Endothelial cell of umbilical vein (primary cell): ENCODE measurements at regions of chr6 and their contacts with region 1.

Region 1: DNA sequence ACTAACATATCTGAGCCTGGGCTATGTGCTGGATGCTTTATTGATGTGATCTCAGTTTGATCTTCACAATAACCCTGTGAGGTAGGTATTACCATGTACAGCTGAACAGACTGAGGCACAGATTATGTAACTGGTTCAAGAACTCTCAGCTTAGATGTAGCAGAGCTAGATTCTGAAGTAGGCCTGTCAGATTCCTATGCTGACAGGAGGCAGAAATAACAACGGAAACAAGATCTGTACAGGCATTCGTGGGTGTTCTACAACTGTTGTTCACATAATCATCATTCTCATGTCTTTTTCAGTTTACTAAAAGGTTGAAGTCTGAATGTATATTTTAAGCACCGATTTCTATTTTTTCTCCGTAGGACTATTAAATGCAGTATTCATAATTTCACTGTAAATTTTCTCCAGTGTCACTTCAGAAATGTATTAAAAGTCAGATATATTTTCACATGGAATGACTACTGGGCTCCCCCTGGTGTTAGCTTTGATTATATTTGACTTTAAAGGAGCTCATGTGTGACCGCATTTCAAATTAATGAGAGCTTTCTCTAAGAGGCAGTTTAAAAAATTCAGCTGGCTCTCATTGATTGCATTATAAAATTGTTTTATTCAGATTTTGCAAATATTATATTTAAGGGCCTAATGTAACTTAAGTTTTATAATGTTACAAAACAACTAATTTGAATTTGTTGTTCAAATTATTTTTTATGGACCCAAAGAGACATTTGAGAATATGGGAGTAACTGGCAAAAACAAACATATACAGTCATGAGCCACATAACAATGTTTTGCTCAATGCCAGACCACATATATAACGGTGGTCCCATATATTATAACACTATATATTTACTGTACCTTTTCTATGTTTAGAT is 36.4 kb upstream of the SLC17A4 start:
- DNase-seq: peak; percentile 48
- H3K4me3 ChIP-seq: no peak overlapping the region
- H3K27ac ChIP-seq: no peak overlapping the region
- H3K4me1 ChIP-seq: peaks cover 23% of the 10 kb centered on the region
- H3K27me3 ChIP-seq: no peaks in the 10 kb centered on the region
- CTCF ChIP-seq: peak; percentile 35 to 42
- POLR2A ChIP-seq: no peak

Region 2: GRCh38 chr6:25223490-25223991 is 494.6 kb before region 1 on chr6:
- CTCF ChIA-PET with region 1: interaction called, 35 read pairs
- POLR2A ChIA-PET with region 1: no interaction called
- dilution Hi-C with region 1: no loop called
- intact Hi-C with region 1: loop called (anchors 1 kb)
- DNase-seq: peak; percentile 81
- H3K4me3 ChIP-seq: peak overlapping the region in 1 of 3 experiments; percentile 20
- H3K27ac ChIP-seq: no peak overlapping the region
- H3K4me1 ChIP-seq: peaks cover 6% of the 10 kb centered on the region
- H3K27me3 ChIP-seq: no peaks in the 10 kb centered on the region
- CTCF ChIP-seq: peak; percentile 68 to 72
- POLR2A ChIP-seq: no peak

Region 3: GRCh38 chr6:25556516-25556915 is 161.6 kb before region 1 on chr6:
- CTCF ChIA-PET with region 1: interaction called, 11 read pairs
- POLR2A ChIA-PET with region 1: no interaction called
- dilution Hi-C with region 1: no loop called
- intact Hi-C with region 1: loop called (anchors 5 kb)
- DNase-seq: peak; percentile 83
- H3K4me3 ChIP-seq: no peak overlapping the region
- H3K27ac ChIP-seq: no peak overlapping the region
- H3K4me1 ChIP-seq: no peaks in the 10 kb centered on the region
- H3K27me3 ChIP-seq: no peaks in the 10 kb centered on the region
- CTCF ChIP-seq: peak; percentile 73 to 85
- POLR2A ChIP-seq: no peak

Region 4: GRCh38 chr6:25652007-25652515 is 66.0 kb before region 1 on chr6 and contains the start of gene SCGN:
- CTCF ChIA-PET with region 1: interaction called, 10 read pairs
- POLR2A ChIA-PET with region 1: no interaction called
- dilution Hi-C with region 1: no loop called
- intact Hi-C with region 1: loop called (anchors 5 kb)
- DNase-seq: peak; percentile 52
- H3K4me3 ChIP-seq: no peak within 1 kb of the TSS
- H3K27ac ChIP-seq: no peak within 1 kb of the TSS
- H3K4me1 ChIP-seq: no peaks in the 10 kb centered on the region
- H3K27me3 ChIP-seq: peaks cover 0 to 8% of the 10 kb centered on the region in 2 experiments
- CTCF ChIP-seq: no peak
- POLR2A ChIP-seq: no peak
- total RNA-seq, gene SCGN: not detected in 2 replicates

Region 5: GRCh38 chr6:25692472-25692871 is 25.6 kb before region 1 on chr6:
- CTCF ChIA-PET with region 1: interaction called, 14 read pairs
- POLR2A ChIA-PET with region 1: no interaction called
- dilution Hi-C with region 1: no loop called
- intact Hi-C with region 1: no loop called
- DNase-seq: no peak
- H3K4me3 ChIP-seq: no peak overlapping the region
- H3K27ac ChIP-seq: no peak overlapping the region
- H3K4me1 ChIP-seq: no peaks in the 10 kb centered on the region
- H3K27me3 ChIP-seq: peaks cover 0 to 2% of the 10 kb centered on the region in 2 experiments
- CTCF ChIP-seq: no peak
- POLR2A ChIP-seq: no peak

Region 6: DNA sequence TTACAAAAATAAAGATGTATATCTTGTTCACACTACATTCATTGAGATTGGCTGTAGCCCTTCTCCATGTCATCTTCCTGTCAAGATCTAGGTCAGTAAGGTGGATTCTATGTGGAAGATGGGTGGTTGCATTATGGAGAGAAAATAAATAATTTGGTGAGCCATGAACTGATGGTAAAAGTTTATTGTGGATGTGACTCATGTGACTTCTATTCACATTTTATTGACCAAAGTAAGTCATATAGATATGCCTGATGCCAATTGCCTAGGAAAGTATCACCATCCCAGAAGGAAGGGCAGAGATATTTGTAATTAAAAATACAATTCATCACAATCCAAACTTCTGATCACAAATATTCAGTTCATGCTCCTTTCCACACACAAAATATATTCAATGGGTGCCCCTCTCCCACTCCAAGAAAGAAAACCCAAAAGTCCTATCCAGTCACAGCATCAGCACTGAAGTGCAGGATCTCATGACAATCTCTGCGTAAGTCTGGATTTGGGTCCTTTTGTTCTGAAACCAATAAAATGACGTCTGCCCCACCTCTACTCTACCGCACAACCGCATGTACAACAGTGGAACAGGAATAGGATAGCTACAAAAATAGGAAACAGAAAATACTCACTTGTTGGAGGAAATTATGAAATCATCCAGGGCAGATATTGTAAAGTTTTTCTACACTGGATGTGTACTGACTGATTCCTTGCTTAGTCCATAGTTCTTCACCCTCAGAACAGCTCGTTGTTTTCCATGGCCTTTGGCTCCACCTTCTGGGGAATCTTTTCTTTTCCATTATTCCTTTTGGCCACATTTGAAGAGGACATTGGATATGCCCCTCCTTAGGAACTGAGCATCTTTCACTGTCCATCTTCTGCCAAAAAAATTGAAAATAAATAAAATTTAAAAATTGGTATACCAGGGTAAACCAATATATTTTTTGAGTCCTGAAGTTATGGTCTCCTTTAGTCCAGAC is 172.1 kb after region 1 on chr6:
- CTCF ChIA-PET with region 1: interaction called, 9 read pairs
- POLR2A ChIA-PET with region 1: no interaction called
- dilution Hi-C with region 1: no loop called
- intact Hi-C with region 1: loop called (anchors 1 kb)
- DNase-seq: peak; percentile 73
- H3K4me3 ChIP-seq: no peak overlapping the region
- H3K27ac ChIP-seq: no peak overlapping the region
- H3K4me1 ChIP-seq: no peaks in the 10 kb centered on the region
- H3K27me3 ChIP-seq: peaks cover 0 to 1% of the 10 kb centered on the region in 2 experiments
- CTCF ChIP-seq: peak; percentile 16 to 17
- POLR2A ChIP-seq: no peak

Region 7: DNA sequence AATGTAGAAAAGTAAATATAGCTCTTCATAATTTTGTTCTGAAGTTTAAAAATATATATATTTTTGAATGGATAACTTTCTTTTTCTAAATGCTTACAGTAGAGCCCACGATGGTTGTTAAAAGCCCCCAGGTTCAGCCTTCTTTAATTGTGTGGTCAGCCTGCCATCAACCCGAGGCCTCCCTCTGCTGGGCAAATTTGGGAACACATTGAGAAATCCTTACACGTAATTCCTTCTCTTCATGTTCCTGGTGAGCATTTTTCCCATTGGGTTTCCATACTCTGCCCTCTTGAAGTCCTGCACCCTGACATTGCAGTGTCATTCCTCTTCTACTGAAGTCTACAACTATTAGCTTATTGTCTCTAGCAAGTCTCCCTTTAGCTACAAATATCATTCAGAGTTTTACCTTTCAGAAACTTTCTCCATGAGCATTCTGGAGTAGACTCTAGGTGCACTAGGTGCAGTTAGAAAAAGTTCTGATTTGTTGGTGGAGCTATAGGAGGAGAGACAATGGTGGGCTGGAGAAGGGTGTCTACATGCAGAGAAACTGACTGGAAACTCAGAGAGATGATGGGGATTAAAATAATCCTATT is 285.1 kb after region 1 on chr6:
- CTCF ChIA-PET with region 1: interaction called, 3 read pairs
- POLR2A ChIA-PET with region 1: no interaction called
- dilution Hi-C with region 1: no loop called
- intact Hi-C with region 1: loop called (anchors 1 kb)
- DNase-seq: peak; percentile 74
- H3K4me3 ChIP-seq: no peak overlapping the region
- H3K27ac ChIP-seq: no peak overlapping the region
- H3K4me1 ChIP-seq: no peaks in the 10 kb centered on the region
- H3K27me3 ChIP-seq: no peaks in the 10 kb centered on the region
- CTCF ChIP-seq: peak; percentile 73 to 76
- POLR2A ChIP-seq: no peak

Region 8: GRCh38 chr6:26375270-26375669 is 657.2 kb after region 1 on chr6:
- CTCF ChIA-PET with region 1: no interaction called
- POLR2A ChIA-PET with region 1: no interaction called
- dilution Hi-C with region 1: no loop called
- intact Hi-C with region 1: no loop called
- DNase-seq: no peak
- H3K4me3 ChIP-seq: no peak overlapping the region
- H3K27ac ChIP-seq: no peak overlapping the region
- H3K4me1 ChIP-seq: no peaks in the 10 kb centered on the region
- H3K27me3 ChIP-seq: no peaks in the 10 kb centered on the region
- CTCF ChIP-seq: no peak
- POLR2A ChIP-seq: no peak